Upper lobe of right lung (tissue), 1 donor: ENCODE measurements at regions of chr9 and their contacts with region 1.

Region 1: GRCh38 chr9:128361986-128362646 is 9.1 kb upstream of the URM1 start:
- DNase-seq: peak; percentile 87
- ATAC-seq: peak; percentile 95
- H3K4me3 ChIP-seq: peak overlapping the region; percentile 55
- H3K27ac ChIP-seq: peak overlapping the region; percentile 52
- H3K4me1 ChIP-seq: peaks cover 24% of the 10 kb centered on the region
- H3K27me3 ChIP-seq: no peaks in the 10 kb centered on the region
- CTCF ChIP-seq: peak; percentile 92

Region 2: DNA sequence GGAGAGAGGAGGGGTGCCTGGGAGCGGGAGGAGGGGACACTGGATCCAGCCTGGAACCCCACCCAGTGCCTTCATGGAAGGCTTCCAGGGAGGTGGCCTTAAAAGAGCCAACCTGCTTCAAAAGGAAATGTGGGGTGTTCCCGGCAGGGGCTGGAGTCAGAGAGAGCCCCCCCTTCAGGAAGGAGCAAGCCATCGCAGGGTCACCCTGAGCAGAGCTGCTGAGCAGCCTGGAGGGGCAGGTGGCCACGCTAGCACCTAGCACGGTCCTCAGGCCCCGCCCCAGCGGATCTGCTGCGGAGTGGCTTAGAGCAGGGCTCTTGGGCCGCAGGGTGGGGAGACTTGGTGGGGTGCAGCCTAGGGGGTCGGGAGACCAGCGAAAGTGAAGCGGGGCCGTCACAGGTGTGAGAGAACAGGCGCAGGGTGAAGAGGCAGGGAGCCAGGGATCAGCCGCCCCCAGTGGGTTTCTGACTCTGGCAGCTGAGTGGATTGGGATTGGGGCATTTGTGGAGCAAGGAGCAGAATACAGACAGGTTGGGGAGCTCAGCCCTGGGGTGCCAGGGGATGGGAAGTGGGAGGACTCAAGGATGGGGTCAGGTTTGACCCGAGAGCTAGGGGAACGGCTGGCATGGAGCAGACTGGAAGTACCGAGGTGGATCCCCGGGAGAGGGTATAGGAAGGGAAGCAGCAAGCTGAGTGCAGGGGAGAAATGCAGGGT is 211.4 kb before region 1 on chr9:
- intact Hi-C with region 1: no loop called
- DNase-seq: no peak
- ATAC-seq: peak; percentile 11
- H3K4me3 ChIP-seq: no peak overlapping the region
- H3K27ac ChIP-seq: no peak overlapping the region
- H3K4me1 ChIP-seq: peaks cover 9% of the 10 kb centered on the region
- H3K27me3 ChIP-seq: no peaks in the 10 kb centered on the region
- CTCF ChIP-seq: peak; percentile 20

Region 3: DNA sequence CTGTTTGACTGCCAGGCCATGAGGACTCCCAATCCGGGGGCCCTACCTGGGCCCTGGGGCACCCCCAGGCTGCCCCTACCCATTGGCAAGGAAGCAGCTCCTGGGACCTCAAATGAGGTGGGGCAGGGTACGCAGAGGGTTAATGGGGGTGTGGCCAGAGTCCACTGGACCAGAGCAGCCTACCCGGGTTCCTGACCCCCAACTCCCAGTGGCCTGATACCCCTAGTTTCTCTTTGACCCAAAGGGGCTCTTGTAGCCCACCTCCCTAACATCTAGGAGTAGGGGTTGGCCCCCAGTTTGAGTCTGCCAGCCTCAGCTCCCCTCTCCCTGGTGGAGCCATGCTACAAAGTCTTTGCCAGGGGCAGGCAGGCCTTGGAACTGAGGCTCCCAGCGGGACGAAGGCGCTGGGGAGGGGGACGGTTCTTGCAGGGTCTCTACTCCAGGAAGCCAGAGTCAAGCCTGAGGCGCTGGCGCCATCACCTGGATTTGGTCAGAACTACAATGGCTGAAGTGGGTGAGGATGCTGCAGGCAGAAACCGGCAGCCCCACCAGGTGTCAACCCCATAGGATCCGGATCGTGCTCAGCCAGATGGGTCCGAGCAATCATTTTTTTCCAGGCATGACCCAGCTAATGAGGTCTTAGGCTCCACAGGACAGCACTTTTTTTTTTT is 50.1 kb after region 1 on chr9:
- intact Hi-C with region 1: loop called (anchors 5 kb)
- DNase-seq: no peak
- ATAC-seq: peak; percentile 65
- H3K4me3 ChIP-seq: no peak overlapping the region
- H3K27ac ChIP-seq: no peak overlapping the region
- H3K4me1 ChIP-seq: no peaks in the 10 kb centered on the region
- H3K27me3 ChIP-seq: peaks cover 14% of the 10 kb centered on the region
- CTCF ChIP-seq: peak; percentile 58

Region 4: DNA sequence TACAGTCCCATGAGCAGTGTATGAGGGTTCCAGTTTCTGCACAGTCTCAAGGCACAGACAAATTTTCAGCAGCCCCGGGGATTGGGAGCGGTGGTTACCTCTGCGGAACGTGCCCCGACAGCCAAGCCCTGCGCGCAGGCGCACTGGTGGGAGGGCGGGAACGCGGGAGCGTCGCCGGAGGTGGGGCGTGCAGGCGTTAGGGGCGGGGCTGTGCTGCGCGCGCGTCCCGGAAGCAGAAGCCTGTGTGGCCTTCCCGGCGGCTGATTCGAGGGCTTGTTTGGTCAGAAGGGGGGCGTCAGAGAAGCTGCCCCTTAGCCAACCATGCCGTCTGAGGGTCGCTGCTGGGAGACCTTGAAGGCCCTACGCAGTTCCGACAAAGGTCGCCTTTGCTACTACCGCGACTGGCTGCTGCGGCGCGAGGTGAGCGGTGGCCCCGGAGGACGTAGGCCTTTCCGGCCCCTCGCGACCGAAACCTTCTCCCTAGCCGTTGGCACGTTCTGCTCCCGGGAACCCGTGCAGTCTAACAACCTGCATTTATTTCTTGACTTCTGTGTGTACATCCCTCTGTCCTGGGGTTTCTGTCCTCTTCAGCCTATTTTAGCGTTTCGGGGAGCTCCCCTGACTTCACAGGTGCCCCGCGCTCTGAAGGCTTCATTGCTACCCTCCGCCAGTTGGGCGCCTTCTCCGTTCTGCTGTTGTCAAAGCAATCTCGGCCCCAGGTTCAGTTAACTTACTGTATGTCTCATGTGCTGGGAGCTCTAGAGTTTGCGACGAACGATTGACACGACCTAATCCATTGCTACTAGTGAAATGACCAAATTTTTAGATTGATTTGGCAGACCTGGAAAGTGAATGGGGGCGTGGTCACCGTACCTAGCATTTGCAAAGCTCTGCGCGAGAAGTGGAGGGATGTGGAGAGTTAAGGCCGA is 142.6 kb after region 1 on chr9 and contains the start of gene GLE1:
- intact Hi-C with region 1: no loop called
- DNase-seq: peak; percentile 98
- ATAC-seq: peak; percentile 99
- H3K4me3 ChIP-seq: peak within 1 kb of the TSS; percentile 64
- H3K27ac ChIP-seq: peak within 1 kb of the TSS; percentile 81
- H3K4me1 ChIP-seq: peaks cover 19% of the 10 kb centered on the region
- H3K27me3 ChIP-seq: no peaks in the 10 kb centered on the region
- CTCF ChIP-seq: no peak
- total RNA-seq, gene GLE1: 21.8 TPM